GM12878 (cell line): ENCODE measurements at regions of chr1 and their contacts with region 1.

Region 1: DNA sequence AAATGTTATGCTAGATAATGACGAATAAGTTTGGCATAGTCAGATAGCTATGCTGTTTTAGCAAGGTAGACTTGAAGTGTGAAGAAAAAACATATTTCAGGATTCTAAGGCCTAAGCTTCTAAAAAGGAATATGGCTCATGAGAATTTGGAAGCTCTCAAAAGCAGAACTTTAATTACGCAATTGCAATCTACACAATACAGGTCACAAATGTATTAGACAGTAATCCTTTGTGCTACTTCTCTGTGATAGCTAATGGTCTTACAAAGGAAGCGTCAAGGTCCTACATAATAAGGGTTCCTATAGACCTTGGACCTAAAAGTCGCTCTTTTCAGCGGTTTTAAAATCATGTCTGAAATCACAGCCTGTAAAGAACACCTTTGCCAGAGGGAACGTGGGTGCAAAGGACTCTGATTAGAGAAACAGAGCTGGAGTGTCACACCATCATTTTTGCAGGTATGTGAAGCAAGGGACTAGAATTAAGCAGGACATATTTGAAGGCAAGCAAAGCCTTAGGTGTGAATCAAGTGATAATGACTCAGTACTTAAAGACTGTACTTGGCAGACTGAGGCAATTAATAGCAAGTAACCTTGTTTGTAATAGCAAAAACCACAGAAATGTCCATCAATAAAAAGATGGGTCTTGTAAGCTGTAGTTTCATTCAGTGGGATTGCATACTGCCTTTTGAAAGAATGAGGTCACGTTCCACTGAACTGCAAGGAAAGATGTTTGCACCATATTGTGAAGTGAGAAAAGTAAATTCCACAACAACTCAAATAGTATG is 420.2 kb downstream of the KCTD3 start:
- DNase-seq: no peak
- ATAC-seq: no peak
- H3K4me3 ChIP-seq: no peak overlapping the region
- H3K27ac ChIP-seq: no peak overlapping the region
- H3K4me1 ChIP-seq: no peaks in the 10 kb centered on the region
- H3K27me3 ChIP-seq: no peaks in the 10 kb centered on the region; a peak in 1 of 4 replicates
- CTCF ChIP-seq: no peak
- EP300 ChIP-seq: no peak
- POLR2A ChIP-seq: no peak
- RAD21 ChIP-seq: no peak

Region 2: GRCh38 chr1:215971793-215972441 is 15.4 kb before region 1 on chr1:
- CTCF ChIA-PET with region 1: no interaction called
- POLR2A ChIA-PET with region 1: no interaction called
- RAD21 ChIA-PET with region 1: no interaction called
- SMC1A ChIA-PET with region 1: interaction called, 16 read pairs
- in situ Hi-C with region 1: no loop called
- intact Hi-C with region 1: no loop called
- DNase-seq: no peak
- ATAC-seq: no peak
- H3K4me3 ChIP-seq: no peak overlapping the region
- H3K27ac ChIP-seq: no peak overlapping the region
- H3K4me1 ChIP-seq: no peaks in the 10 kb centered on the region
- H3K27me3 ChIP-seq: no peaks in the 10 kb centered on the region
- CTCF ChIP-seq: no peak
- EP300 ChIP-seq: no peak
- POLR2A ChIP-seq: no peak
- RAD21 ChIP-seq: no peak